Activated CD4-positive, alpha-beta memory T cell treated with anti-CD3 and anti-CD28 coated beads, Interleukin-2, amount 10 ng/mL, durations not matched to agents 7 days and 5 days (primary cell): ENCODE measurements at regions of chr22 and their contacts with region 1.

Region 1: DNA sequence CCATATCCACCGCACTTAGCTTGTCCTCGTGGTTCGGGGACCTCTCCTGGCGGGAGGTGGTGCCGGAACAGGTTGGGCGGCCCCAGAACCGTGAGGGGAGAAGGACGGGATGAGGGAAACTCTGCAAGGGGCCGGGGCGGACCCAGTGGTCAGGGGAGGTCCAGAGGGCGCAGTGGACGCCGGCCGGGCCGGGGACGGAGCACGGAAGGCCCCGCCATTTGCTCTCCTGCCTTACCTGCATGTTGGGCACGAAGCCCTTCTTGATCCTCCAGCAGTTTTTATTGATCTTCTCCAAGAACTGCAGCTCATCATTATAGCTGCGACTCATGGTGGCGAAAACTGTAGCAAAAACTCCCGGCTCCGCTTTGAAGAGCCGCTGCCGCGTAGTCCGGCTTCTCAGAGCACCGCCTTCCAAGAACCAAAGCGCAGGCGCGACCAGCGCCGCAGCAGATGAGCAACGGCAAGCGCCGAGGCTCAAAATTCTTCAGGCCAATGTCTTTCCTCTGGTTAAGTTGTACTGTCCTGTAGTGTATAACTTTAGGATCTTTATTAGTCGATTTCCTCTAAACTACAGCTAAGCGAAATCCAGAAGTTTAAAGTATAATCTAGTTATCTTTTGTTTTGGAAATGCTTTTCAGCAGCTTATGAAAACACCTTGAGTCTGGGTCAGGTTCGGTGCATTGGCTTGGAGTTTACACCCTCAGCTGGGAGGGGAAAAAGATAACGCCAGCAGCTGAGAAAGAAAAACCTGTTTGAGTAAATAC is at the start of gene RTCB:
- DNase-seq: peak; percentile 93
- H3K4me3 Mint-ChIP-seq: peak within 1 kb of the TSS; percentile 96
- H3K27ac Mint-ChIP-seq: peak within 1 kb of the TSS; percentile 87
- H3K4me1 Mint-ChIP-seq: peaks cover 54% of the 10 kb centered on the region
- H3K27me3 Mint-ChIP-seq: peaks cover 6% of the 10 kb centered on the region
- total RNA-seq, gene RTCB: 58.3 to 61.6 TPM

Region 2: DNA sequence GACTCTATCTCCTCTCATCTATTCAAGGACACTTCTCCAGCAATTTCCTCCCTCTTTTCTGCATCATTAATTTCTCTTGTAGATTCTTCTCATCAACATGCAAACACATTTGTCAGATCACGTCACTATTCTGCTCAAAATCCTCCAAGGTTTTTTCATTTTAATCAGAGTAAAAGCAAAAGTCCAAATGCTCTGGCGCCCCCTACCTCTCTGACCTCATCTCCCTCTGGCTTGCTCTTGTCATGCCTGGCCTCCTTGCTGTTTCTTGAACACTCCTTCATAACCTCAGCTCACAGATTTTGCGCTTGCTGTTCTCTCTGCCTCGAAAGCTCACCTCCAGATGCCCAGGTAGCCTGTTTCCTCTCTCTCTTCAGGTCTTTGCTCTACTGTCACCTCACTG is 22.3 kb before region 1 on chr22:
- CTCF ChIA-PET with region 1: interaction called, 15 read pairs
- POLR2A ChIA-PET with region 1: interaction called, 3 read pairs
- DNase-seq: peak; percentile 26
- H3K4me3 Mint-ChIP-seq: no peak overlapping the region
- H3K27ac Mint-ChIP-seq: peak overlapping the region; percentile 1
- H3K4me1 Mint-ChIP-seq: no peaks in the 10 kb centered on the region
- H3K27me3 Mint-ChIP-seq: no peaks in the 10 kb centered on the region

Region 3: DNA sequence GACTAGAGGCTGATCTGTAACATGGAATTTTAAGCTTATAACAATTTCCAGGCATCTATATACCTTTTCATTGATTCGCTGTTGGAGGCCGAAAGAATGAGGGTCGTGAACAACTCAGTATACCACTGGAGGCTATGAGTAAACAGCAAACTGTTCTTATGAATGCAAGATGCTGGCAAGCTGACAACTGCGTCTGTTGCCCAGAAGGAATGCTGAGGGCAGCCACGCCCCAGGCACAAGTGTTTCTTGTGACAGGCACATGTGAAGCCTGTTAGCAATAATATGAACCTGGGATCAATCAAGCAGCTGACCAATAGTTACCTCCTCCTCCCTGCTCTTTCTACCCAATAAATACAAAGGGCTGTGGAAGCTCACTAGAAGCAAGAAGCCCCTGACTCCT is 15.3 kb before region 1 on chr22:
- CTCF ChIA-PET with region 1: interaction called, 15 read pairs
- POLR2A ChIA-PET with region 1: interaction called, 12 read pairs
- DNase-seq: no peak
- H3K4me3 Mint-ChIP-seq: no peak overlapping the region
- H3K27ac Mint-ChIP-seq: no peak overlapping the region
- H3K4me1 Mint-ChIP-seq: peaks cover 24% of the 10 kb centered on the region
- H3K27me3 Mint-ChIP-seq: no peaks in the 10 kb centered on the region

Region 4: GRCh38 chr22:32474635-32475467 is 62.8 kb after region 1 on chr22 and contains the start of gene FBXO7:
- CTCF ChIA-PET with region 1: interaction called, 38 read pairs
- POLR2A ChIA-PET with region 1: interaction called, 54 read pairs
- DNase-seq: peak; percentile 88
- H3K4me3 Mint-ChIP-seq: peak within 1 kb of the TSS; percentile 94
- H3K27ac Mint-ChIP-seq: peak within 1 kb of the TSS; percentile 90
- H3K4me1 Mint-ChIP-seq: peaks cover 24% of the 10 kb centered on the region
- H3K27me3 Mint-ChIP-seq: no peaks in the 10 kb centered on the region
- total RNA-seq, gene FBXO7: 95.4 to 97.1 TPM